BJ (cell line): ENCODE measurements at regions of chr4 and their contacts with region 1.

Region 1: GRCh38 chr4:82798168-82799005 is at the start of gene SCD5:
- DNase-seq: peak; percentile 20
- H3K4me3 ChIP-seq: peak within 1 kb of the TSS; percentile 85
- H3K27me3 ChIP-seq: no peaks in the 10 kb centered on the region
- CTCF ChIP-seq: peak; percentile 21; the same call in 1 of the 2 replicates
- polyA plus RNA-seq, gene SCD5: 32.5 and 34.6 TPM in 2 replicates

Region 2: GRCh38 chr4:82721819-82722423 is 76.5 kb before region 1 on chr4:
- CTCF ChIA-PET with region 1: interaction called, 21 read pairs
- POLR2A ChIA-PET with region 1: no interaction called
- DNase-seq: no peak
- H3K4me3 ChIP-seq: no peak overlapping the region
- H3K27me3 ChIP-seq: no peaks in the 10 kb centered on the region
- CTCF ChIP-seq: peak; percentile 62

Region 3: GRCh38 chr4:82785611-82786400 is 12.6 kb before region 1 on chr4:
- CTCF ChIA-PET with region 1: interaction called, 10 read pairs
- POLR2A ChIA-PET with region 1: interaction called, 4 read pairs
- DNase-seq: peak; percentile 65
- H3K4me3 ChIP-seq: no peak overlapping the region
- H3K27me3 ChIP-seq: no peaks in the 10 kb centered on the region
- CTCF ChIP-seq: no peak